Mammary epithelial cell (primary cell): ENCODE measurements at regions of chr17 and their contacts with region 1.

Region 1: DNA sequence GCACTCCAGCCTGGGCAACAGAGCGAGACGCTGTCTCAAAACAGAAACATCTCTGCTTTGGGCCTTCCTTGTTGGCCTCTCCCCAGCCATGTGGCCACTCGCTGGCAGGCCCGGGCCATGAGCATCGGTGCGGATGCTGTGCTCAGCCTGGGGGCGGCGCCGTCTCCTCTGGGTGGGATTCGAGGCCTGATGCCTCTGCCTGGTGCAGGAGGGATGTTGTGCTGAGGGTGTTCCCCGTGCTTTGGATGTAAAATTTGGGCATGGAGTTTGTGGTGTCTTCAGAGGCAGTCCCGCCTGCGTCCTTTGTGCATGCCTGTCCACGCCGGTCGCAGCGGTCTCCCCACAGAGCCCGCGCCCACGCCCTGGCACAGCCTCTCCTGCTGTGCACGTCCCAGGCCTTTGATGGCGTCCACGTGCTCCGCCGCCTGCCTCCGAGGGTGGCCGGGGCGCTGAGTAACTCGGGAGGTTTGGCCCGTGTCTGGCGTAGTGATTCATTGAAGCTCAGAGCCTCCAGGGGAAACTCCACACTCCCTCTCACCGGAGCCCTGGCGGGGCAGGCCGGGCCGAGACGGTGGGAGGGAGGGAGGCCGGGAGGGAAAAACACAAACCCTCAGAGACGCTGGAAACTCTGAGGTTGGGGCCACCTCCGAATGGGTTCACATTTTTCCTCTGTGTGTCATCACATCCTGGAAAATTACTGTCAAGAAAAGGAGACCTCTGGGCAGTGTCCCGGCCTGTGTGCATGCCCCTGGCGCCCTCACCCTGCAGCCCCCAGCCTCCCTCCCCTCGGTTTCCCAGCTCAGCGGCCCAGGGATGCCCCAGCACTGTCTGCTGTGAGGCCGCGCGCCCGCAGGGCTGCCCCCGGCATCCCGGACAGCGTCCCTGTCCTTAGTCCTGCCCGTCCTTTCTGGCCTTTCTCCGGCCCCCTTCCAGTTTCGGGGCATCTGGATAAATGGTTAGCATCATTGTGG is 19.0 kb downstream of the CENPX start:
- DNase-seq: peak; percentile 97
- H3K4me3 ChIP-seq: no peak overlapping the region
- H3K27ac ChIP-seq: no peak overlapping the region
- H3K4me1 ChIP-seq: peaks cover 33% of the 10 kb centered on the region
- H3K27me3 ChIP-seq: no peaks in the 10 kb centered on the region
- CTCF ChIP-seq: peak in 1 of 2 donors; percentile 2

Region 2: DNA sequence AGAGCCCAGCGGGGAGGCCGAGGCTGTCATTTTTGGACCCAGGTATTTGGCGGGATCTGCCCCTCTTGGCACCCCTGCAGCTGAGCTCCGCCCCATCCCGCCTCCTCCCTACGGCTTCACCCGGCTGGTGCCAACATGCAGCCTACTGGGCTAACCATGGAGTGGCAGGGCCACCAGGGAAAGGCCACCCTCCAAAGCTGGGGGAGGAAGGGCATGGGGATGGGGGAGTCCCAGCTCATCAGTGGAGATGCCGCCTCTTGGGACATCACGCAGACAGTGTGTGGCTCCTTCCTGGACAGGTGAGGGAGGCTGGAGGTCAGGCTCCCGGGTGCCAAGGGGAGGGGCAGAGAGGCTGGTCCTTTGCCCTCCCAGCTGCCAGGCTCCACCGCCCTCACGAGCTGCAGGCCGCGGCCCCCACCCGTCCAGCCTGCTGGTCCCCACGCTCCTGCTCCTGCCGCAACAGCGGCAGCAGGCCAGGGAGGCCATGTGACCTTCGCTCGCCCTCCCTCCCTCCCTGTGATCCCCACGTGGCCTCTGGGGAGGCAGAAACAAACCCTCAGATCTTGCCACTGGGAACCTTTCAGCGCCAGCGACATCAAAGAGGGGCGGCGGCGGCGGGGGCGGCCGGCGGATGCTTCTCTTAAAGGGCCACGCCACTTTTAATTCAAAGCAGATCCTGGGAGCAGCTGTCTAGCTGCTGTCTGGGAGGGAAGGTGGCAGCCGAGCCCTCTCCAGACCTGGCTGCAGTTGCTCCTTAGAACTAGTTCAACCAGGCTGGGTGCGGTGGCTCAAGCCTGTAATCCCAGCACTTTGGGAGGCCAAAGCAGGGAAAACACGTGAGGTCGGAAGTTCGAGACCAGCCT is 35.9 kb before region 1 on chr17:
- CTCF ChIA-PET with region 1: no interaction called
- dilution Hi-C with region 1: no loop called
- in situ Hi-C with region 1: no loop called
- intact Hi-C with region 1: loop called (anchors 5 kb)
- DNase-seq: no peak
- H3K4me3 ChIP-seq: no peak overlapping the region
- H3K27ac ChIP-seq: no peak overlapping the region
- H3K4me1 ChIP-seq: peaks cover 6% of the 10 kb centered on the region
- H3K27me3 ChIP-seq: no peaks in the 10 kb centered on the region
- CTCF ChIP-seq: no peak

Region 3: GRCh38 chr17:82241183-82241925 is 237.7 kb after region 1 on chr17:
- CTCF ChIA-PET with region 1: no interaction called
- dilution Hi-C with region 1: no loop called
- in situ Hi-C with region 1: no loop called
- intact Hi-C with region 1: no loop called
- DNase-seq: peak; percentile 81
- H3K4me3 ChIP-seq: no peak overlapping the region
- H3K27ac ChIP-seq: no peak overlapping the region
- H3K4me1 ChIP-seq: peaks cover 77% of the 10 kb centered on the region
- H3K27me3 ChIP-seq: no peaks in the 10 kb centered on the region
- CTCF ChIP-seq: no peak